ENCODE measurements at regions of chr1 and their contacts with region 1.

Region 1: DNA sequence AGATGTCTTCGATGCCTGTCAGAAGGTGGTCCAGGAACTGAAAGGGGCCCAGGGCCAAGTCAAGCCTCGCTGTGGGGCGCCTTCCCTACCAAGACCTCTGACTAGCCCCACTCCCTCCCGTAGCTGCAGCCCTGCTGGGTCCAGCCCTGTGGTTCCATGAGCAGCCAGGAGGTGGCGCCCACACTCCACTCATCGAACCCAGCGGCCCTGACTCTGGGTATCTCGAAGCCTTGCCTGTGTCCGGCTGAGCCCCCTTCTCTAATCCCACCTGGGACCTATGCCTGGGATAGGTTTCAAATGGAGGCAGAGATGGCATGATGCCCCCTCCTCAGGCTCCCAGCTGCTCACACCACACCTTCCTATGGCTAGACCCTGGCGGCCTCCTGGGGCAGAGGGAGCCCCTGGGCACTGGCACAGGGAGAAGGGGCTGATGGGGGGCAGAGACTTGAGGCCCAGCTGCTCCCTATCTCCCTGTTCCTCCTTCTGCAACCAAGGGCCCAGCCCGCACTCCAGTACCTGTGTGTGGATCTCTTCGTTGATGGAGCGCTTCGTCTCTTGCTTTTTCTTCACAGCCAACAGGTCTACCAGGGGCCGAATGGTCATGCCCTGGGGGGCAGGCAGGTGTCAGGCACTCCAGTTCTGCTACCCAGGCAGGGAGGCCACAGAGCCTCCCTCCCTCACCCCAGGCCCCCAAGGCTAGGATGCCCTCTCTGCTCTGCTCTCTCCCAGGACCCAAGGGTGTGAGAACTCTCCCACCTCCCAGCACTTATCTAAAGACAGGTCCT is 52.0 kb downstream of the SLC9A1 start:
- DNase-seq: peak; percentile 67 to 79 (median 71)
- H3K4me3 ChIP-seq: no peak overlapping the region
- H3K4me3 Mint-ChIP-seq: peak overlapping the region in 1 of 8 donors; percentile 26
- H3K27ac ChIP-seq: no peak overlapping the region
- H3K27ac Mint-ChIP-seq: peak overlapping the region in 4 of 7 donors; percentile 24 to 71 (median 38)
- H3K4me1 ChIP-seq: no peaks in the 10 kb centered on the region
- H3K4me1 Mint-ChIP-seq: peaks cover 0 to 4% (median under 1%) of the 10 kb centered on the region in 4 donors
- H3K27me3 ChIP-seq: no peaks in the 10 kb centered on the region
- H3K27me3 Mint-ChIP-seq: no peaks in the 10 kb centered on the region

Region 2: DNA sequence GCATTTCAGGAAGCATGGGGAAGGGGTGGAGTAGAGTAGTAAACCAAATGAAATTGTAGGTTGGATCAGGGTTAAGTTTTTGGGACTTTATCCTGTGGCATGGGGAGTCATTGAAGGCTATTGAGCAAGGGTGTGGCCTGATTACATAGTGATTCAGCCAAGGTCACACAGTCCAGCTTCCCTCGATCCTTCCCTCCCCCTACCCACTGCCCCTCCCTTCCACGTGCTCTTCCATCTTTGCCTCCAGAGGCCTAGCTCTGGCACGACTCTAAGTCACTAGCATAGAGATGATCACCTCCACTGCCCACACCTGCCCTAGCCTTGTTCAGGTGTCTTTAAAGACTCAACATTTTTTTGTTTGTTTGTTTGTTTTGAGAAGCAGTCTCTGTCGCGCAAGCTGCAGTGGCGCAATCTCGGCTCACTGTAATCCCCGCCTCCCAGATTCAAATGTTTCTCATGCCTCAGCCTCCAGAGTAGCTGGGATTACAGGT is 89.2 kb after region 1 on chr1:
- CTCF ChIA-PET with region 1: interaction called, 12 read pairs
- POLR2A ChIA-PET with region 1: no interaction called
- intact Hi-C with region 1: no loop called
- DNase-seq: no peak
- H3K4me3 ChIP-seq: no peak overlapping the region
- H3K4me3 Mint-ChIP-seq: no peak overlapping the region
- H3K27ac ChIP-seq: no peak overlapping the region
- H3K27ac Mint-ChIP-seq: no peak overlapping the region
- H3K4me1 ChIP-seq: no peaks in the 10 kb centered on the region
- H3K4me1 Mint-ChIP-seq: no peaks in the 10 kb centered on the region
- H3K27me3 ChIP-seq: no peaks in the 10 kb centered on the region
- H3K27me3 Mint-ChIP-seq: peaks cover 0 to 2% of the 10 kb centered on the region in 2 donors

Region 3: GRCh38 chr1:27201295-27201694 is 98.4 kb after region 1 on chr1:
- CTCF ChIA-PET with region 1: interaction called, 12 read pairs
- POLR2A ChIA-PET with region 1: no interaction called
- intact Hi-C with region 1: loop called (anchors 1 kb)
- DNase-seq: no peak
- H3K4me3 ChIP-seq: no peak overlapping the region
- H3K4me3 Mint-ChIP-seq: no peak overlapping the region
- H3K27ac ChIP-seq: no peak overlapping the region
- H3K27ac Mint-ChIP-seq: no peak overlapping the region
- H3K4me1 ChIP-seq: peaks cover 6% of the 10 kb centered on the region
- H3K4me1 Mint-ChIP-seq: peaks cover 4 to 6% (median 5%) of the 10 kb centered on the region in 4 donors
- H3K27me3 ChIP-seq: no peaks in the 10 kb centered on the region
- H3K27me3 Mint-ChIP-seq: peaks cover 1 to 5% of the 10 kb centered on the region in 2 donors